Psoas muscle (tissue), 8 donors: ENCODE measurements at regions of chr15 and their contacts with region 1.

Region 1: DNA sequence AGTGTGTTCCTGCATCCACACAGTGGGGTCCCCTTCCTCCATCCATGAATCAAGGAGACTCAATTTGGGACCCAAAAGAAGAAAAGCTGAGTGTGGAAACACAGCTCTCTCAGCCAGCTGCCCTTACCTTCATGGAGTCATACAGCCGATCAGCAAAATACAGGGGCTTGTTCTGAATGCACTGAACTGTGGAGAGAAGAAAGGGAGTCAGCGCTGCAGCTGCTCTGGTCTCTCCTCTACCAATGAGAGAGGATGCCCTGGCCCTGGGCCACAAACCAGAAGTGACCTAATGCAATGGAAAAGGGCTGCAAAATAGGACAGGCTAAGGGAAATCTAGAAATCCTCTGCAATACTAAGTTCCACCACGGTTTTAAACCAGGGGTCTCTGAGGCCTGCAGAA is 46.7 kb downstream of the ANXA2 start:
- DNase-seq: no peak
- ATAC-seq: peak; percentile 20 to 29 (median 23)
- H3K4me3 ChIP-seq: no peak overlapping the region
- H3K27ac ChIP-seq: no peak overlapping the region
- H3K4me1 ChIP-seq: no peaks in the 10 kb centered on the region
- H3K27me3 ChIP-seq: no peaks in the 10 kb centered on the region
- CTCF ChIP-seq: no peak

Region 2: DNA sequence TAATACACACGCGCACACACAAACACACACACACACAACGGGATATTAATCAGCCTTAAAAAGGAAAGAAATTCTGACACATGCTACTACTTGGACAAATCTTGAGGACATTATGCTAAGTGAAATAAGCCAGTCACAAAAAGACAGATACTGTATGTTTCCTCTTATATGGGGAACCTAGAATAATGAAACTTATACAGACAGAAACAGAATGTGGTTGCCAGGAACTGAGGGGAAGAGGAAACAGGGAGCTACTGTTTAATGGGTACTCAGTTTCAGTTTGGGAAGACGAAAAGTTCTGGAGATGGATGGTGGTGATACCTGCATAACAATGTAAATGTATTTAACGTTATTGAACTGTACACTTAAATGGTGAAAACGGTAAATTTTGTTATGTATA is 107.7 kb after region 1 on chr15:
- intact Hi-C with region 1: loop called in 1 of 2 experiments (anchors 5 kb)
- DNase-seq: no peak
- ATAC-seq: no peak
- H3K4me3 ChIP-seq: no peak overlapping the region
- H3K27ac ChIP-seq: no peak overlapping the region
- H3K4me1 ChIP-seq: no peaks in the 10 kb centered on the region
- H3K27me3 ChIP-seq: no peaks in the 10 kb centered on the region
- CTCF ChIP-seq: no peak

Region 3: DNA sequence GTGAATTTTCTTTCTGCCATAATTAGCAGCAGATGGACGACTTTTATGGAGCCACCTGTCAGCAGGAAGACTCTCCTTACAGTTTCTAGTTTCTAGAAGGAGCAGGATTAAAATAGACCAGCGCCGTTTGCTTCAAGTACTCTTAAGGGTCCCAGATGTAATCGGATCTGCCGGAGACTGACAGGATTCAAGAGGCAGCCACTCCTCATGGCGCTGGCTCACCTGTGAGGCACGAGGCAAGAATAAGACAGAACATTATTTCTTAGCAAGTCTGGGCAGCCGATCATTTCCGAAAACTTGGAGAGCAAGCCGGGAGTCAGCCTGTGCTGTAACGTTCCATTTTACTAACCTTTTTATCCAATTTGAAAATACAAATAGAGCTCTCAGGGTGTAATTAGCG is 1288.4 kb after region 1 on chr15:
- intact Hi-C with region 1: no loop called
- DNase-seq: peak in 1 of 2 donors; percentile 54
- ATAC-seq: peak; percentile 74 to 95 (median 92)
- H3K4me3 ChIP-seq: peak overlapping the region; percentile 27
- H3K27ac ChIP-seq: peak overlapping the region; percentile 62
- H3K4me1 ChIP-seq: no peaks in the 10 kb centered on the region
- H3K27me3 ChIP-seq: no peaks in the 10 kb centered on the region
- CTCF ChIP-seq: no peak